Right ventricle myocardium inferior (tissue), 1 donor: ENCODE measurements at regions of chr1 and their contacts with region 1.

Region 1: DNA sequence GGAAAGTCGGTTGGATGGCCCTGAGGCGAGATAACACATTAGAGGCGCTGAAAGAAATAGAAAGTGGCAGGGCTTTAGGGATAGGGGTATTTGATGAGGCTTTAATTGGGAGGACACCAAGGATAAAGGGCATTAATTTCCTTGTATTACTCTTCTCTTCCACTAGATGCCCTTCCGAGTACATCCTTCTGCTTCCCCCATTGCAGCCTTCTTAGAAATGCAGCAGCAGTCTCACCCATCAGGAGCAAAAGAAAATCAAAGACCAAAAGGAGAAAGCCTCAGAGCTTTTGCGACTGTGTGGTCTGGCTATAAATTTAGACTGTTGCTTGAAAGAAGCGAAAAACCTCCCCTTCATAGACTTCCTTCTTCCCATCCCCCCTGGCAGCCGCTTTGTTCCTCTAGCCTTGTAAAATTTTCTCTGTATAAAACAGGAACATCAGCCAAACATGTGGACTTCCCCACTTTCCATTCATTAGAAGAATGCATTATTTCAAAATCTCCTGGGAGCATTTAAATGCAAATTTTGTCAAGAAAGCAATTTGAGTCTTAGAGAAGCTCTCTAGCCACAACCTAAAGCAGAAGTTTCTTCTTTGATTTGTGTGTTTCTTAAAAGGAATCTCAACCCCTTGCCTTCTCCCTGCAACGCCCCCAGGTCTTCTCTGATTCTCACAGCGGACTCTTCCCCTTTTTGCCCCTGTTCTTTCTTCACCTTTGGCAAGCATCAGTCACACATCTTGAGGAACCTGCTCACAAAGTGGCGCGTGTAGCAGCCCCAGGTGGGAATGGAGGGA is 76.6 kb downstream of the NDUFS5 start:
- DNase-seq: no peak
- ATAC-seq: peak; percentile 33

Region 2: GRCh38 chr1:39050001-39050400 is 52.7 kb before region 1 on chr1:
- intact Hi-C with region 1: no loop called
- DNase-seq: no peak
- ATAC-seq: no peak

Region 3: DNA sequence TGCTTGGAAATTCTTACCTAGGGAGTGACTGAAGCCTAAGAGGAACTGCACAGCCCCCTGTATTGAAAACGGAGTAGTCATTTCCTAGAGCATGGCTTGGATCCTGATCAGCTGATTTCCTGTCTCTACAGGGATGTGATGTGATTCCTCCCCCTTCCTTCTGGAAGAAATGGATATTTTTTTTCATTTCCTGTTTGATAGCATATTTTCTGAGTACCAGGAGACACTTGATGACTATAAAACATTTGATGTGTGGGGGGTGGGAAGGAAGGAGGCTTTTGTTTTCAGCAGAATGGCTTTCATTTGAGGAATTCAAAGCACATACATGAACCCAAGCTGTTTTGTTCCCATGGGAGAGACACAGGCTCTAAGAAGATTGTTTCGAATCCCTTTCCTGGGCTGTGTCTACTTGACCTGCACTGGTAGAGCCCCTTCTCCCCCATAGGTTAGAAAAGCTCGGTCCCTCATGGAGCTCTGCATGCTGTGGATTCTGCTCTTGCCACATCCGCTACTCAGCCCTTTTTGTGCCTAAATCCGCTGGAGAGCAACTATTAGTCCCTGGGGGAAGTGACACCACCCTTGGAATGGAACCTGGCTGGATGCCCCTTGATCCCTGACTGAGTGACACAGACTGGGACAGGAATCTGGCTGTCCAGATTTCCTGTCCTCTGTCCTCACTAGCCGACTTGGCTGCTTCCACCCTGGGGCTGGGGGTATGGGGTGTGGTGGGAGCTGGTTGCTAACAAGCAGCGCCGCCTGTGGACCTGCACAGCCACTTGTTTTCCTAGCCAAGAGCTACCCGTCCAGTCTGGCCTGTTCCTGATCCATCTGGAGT is 30.0 kb after region 1 on chr1:
- intact Hi-C with region 1: loop called (anchors 2 kb)
- DNase-seq: peak; percentile 81
- ATAC-seq: peak; percentile 74

Region 4: GRCh38 chr1:39189592-39190041 is 86.9 kb after region 1 on chr1:
- intact Hi-C with region 1: loop called (anchors 1 kb)
- DNase-seq: no peak
- ATAC-seq: no peak

Region 5: DNA sequence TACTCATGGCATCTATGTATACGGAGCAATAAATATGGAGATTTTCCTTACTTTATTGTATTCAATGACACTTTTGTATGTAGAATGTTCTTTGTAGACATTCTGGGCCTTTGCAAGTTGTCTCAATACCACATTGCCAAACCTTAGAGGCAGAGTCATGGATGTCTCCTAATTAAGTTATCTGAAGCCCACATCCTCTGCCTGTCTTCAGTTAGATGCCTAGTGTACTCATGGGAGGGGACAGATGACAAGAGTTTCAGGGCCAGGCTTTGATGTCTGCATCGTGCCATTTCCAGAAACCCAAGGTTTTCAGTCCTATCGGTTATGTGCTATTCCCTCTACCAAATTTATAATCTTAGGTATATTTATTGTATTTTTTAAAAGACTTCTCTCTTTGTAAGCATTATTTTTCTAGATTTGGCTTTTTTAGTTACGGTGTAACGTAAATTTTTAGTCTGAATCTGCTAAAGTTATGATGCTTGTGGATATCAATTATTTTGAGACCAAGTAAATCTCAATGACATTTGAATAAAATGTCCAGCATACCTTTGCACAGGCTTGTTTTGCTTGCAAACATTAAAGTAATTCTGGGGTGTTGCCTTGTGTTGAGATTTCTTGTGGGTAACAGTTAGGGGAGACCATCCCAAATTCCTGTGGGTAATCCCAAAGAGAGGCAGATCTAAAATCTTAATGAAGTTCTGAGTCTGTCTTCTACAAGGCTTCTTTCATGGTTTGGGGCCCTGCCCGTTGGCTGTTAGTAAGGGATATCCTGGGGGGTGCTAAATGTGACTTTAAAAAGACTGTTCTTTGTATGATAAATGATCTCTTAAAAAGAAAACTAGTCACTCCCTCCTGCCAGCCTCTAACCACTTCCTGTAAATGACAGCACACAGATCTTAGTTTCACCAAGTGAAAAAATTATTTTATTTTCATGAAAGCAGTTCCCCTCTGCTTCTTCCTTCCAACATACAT is 93.8 kb after region 1 on chr1:
- intact Hi-C with region 1: loop called (anchors 1 kb)
- DNase-seq: no peak
- ATAC-seq: no peak

Region 6: GRCh38 chr1:39258146-39258924 is 155.6 kb after region 1 on chr1:
- intact Hi-C with region 1: loop called (anchors 1 kb)
- DNase-seq: no peak
- ATAC-seq: peak; percentile 79

Region 7: DNA sequence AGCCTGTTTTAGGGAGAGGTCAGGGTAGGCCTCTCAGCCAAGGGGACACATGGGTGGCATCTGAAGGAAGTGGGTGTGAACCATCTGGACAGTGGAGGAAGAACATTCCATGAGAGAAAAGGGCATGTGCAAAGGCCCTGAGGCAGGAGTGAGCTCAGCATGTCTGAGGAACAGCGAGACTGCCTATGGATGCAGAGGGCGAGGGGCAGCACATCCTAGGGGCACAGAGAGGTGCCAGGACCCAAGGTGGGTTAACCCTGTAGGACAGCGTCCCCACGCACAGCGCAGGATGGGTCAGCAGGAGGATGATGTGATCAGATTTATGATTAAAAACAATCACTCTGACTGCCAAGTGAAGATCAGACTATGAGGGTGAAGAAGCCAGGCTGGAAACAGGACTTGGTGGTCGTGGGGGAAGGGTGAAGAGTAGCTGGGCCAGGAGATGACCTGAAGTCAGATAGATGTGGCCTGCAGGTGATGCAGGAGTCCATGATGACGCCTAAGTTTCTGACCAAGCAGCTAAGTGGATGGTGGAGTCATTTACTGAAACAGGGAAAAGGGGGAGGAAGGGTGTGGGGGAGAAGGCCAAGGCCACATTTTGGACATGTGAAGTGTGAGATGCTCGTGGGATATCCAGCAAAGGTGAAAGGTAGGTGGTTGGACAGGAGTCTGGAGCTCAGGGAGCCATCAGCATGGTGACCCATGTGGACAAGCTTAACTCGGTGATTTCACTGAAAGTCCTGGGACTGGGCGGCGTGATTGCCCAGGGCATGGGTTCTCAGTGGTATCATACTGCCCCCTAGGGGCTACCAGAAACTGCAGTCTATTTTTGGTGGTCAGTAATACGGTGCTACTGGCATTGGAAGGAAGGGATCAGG is 436.1 kb after region 1 on chr1:
- intact Hi-C with region 1: loop called (anchors 10 kb)
- DNase-seq: no peak
- ATAC-seq: peak; percentile 88